Heart left ventricle (tissue), 16 donors: ENCODE measurements at regions of chr11 and their contacts with region 1.

Region 1: DNA sequence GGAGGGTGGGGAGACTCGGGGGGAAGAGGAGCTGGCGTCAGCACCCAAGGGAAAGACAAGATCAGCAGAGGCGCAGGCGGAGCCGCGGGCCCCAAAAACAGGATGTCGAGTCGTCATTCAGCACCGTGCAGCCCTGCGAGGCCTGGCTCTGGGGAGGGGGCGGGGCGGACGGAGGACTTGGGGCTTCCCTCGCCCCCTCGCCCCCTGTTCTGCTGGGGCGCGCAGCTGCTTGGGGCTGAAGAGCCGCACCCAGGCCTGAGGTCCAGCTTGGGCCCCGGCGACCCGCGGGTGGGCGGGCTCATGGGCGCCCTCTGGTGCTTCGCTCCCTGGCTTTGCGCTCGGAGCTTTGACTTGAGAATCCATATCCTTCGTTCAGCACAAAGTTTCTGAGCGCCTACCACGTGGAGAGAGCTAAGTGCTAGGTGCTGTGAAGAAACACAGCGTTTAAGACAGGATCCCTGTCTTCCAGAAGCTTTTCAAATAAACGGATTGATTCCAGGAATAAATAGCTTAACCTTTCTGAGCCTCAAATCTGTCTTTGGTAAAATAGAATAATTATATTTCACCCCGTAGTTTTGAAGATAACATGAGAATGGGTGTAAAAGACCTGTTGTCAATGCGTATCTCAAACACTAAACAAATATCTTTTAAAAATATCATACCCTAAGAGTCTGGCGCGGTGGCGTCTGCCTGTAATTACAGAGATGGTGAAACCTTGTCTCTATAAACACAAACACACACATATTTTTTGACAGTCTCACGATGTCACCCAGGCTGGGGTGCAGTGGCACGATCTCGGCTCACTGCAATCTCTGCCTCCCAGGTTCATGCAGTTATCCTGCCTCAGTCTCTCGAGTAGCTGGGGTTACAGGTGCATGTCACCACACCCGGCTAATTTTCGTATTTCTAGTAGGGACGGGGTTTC is 929 bp upstream of the RHOG start:
- DNase-seq: peak; percentile 87 to 94 (median 88)
- ATAC-seq: peak; percentile 44 to 78 (median 68)
- H3K4me3 ChIP-seq: peak overlapping the region; percentile 42 to 98 (median 84)
- H3K27ac ChIP-seq: peak overlapping the region; percentile 92 to 100 (median 98)
- H3K4me1 ChIP-seq: peaks cover 8 to 41% (median 32%) of the 10 kb centered on the region in 12 donors
- H3K27me3 ChIP-seq: no peaks in the 10 kb centered on the region
- CTCF ChIP-seq: peak; percentile 71 to 97 (median 90)
- POLR2A ChIP-seq: peak in 1 of 2 donors; percentile 44

Region 2: GRCh38 chr11:3797329-3798095 is 44.2 kb before region 1 on chr11 and contains the start of gene NUP98:
- intact Hi-C with region 1: loop called in 5 of 10 experiments (anchors 2 to 5 kb)
- DNase-seq: peak; percentile 100
- ATAC-seq: peak; percentile 95 to 98 (median 98)
- H3K4me3 ChIP-seq: peak within 1 kb of the TSS; percentile 69 to 100 (median 88)
- H3K27ac ChIP-seq: peak within 1 kb of the TSS; percentile 80 to 99 (median 96)
- H3K4me1 ChIP-seq: peaks cover 7 to 36% (median 22%) of the 10 kb centered on the region in 12 donors
- H3K27me3 ChIP-seq: no peaks in the 10 kb centered on the region
- CTCF ChIP-seq: peak in 3 of 12 donors; percentile 2 to 20 (median 4)
- POLR2A ChIP-seq: peak; percentile 99 to 100
- total RNA-seq, gene NUP98: 36.0 to 77.9 (median 46.2) TPM

Region 3: DNA sequence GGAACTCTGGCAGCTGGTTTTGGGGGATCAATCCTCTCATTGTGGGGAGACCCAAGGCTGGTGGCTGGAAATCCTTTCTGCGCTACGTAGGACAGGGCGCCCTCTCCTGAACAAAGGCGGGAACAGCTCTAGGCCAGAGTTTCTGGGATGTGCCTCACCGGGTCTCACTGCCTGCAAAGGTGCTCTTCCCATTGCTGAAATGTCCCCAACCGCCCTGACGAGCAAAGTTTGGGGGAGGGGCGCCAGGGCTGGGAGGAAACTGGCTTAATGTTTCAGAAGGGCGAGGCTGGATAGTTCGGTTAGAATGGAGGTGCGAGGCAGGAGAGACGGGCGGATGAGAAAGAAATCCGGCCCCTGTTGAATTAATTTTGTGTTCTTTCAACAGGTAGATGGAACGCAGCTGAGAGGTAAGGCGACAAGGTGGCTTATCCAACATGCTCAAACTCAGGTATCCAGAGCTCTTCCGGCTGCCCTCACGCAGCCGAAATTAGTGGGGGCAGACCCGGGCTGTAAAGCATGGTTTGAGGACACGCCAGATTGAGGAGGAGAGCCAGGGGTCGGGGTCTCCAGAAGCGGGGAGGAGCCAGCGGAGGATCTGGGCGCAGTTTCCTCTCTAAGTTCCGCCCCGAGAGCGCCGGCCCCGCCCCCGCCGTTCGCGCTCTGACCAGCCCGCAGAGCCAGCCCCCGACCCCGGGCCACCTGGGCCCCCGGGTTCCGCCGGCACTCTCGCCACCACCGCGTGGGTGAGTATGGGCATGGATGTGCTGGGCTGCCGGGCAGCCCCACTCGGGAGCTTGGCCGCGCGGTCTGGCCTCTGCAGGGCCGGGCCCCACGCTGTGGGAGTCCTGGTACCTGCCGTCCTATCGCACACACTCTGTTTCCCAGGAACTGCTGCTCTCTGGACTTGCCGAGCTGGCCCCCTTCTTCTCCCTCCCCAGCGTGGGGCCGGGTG is 33.5 kb before region 1 on chr11 and contains the start of gene PGAP2:
- intact Hi-C with region 1: loop called in 4 of 10 experiments (anchors 5 kb)
- DNase-seq: peak; percentile 60 to 83 (median 73)
- ATAC-seq: peak in 3 of 4 donors; percentile 59 to 80 (median 72)
- H3K4me3 ChIP-seq: peak within 1 kb of the TSS; percentile 38 to 96 (median 70)
- H3K27ac ChIP-seq: peak within 1 kb of the TSS in 11 of 12 donors; percentile 3 to 87 (median 71)
- H3K4me1 ChIP-seq: peaks cover 0 to 38% (median 16%) of the 10 kb centered on the region in 12 donors
- H3K27me3 ChIP-seq: no peaks in the 10 kb centered on the region
- CTCF ChIP-seq: peak; percentile 43 to 79 (median 62)
- POLR2A ChIP-seq: no peak
- total RNA-seq, gene PGAP2: 17.6 to 31.7 (median 23.3) TPM